ENCODE measurements at regions of chr15 and their contacts with region 1.

Region 1: DNA sequence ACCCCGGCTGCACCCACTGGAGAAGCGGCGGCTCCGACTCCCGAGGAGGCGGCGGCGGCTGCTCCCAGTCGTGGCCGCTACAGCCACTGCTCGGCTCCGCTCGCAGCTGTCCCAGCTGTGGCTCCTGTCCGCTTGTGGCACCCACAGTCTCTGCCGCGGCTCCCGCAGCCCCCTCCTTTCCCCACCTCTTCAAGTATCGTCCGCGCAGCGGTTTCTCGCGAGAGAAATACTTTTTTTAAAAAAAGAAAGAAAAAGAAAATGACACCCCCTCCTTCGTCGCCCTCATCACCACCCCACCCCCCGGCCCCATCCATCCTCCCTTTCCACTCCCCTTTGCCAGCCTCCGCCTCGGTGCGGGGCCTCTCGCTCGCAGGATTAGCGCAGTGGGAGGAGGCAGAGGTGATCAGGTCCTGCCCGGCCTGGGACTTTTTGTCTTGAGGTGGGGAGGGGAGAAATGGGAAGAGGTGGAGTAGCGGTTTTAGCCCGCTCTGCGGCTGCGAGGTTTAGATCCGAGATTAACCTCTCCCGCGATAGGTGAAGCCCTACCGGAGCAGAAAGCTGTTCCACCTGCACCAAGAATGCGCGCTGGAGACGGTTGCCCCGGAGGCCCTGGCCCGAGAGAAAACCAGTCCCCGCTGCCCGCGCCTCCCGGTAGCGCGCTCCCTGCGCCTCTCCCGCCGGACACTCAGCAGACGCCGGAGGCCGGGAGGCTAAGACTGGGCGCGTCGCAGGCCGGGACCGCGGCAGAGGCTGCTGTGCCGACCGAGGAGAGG is at the start of gene FBN1:
- DNase-seq: peak; percentile 74 to 80 (median 78)
- ATAC-seq: peak; percentile 70 to 89 (median 87)
- H3K4me3 ChIP-seq: peak within 1 kb of the TSS; percentile 67 to 96 (median 88)
- H3K27ac ChIP-seq: peak within 1 kb of the TSS; percentile 83 to 94 (median 86)
- H3K4me1 ChIP-seq: peaks cover 0 to 40% (median 8%) of the 10 kb centered on the region in 12 donors
- H3K27me3 ChIP-seq: peaks cover 0 to 36% (median 0%) of the 10 kb centered on the region in 9 donors
- CTCF ChIP-seq: no peak
- POLR2A ChIP-seq: peak; percentile 16 to 74
- total RNA-seq, gene FBN1: 22.5 to 115 (median 38.9) TPM

Region 2: DNA sequence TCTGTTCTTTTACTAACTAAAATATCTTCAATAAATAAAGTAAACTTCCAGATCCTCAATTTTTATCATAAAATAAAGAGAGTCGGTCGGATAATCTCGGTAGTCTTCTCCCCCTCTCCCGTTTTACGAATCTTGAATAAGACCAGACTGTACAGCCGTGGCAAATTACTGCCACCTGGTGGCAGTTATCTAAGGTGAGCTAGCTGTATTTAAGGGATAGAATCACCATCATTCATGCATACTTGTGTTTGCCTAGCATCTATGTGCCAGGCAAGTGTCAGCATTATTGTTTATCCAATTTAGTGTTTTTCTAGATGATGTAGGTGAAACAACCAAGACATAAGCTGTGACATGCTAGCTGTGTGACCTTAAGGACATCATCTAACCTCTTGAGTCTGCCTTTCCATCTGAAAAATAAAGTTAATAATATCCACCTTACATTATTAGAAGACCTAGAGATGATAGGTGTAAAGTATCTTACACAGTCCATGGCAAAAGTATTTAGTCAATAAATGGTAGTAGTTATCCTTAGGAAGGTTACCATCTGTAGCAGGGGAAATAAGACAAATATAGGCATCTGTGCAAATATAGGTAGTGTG is 293.2 kb before region 1 on chr15:
- intact Hi-C with region 1: loop called in 4 of 10 experiments (anchors 5 to 10 kb)
- DNase-seq: peak in 4 of 5 donors; percentile 28 to 50 (median 36)
- ATAC-seq: peak in 3 of 4 donors; percentile 68 to 71 (median 70)
- H3K4me3 ChIP-seq: peak overlapping the region in 1 of 12 donors; percentile 16
- H3K27ac ChIP-seq: no peak overlapping the region
- H3K4me1 ChIP-seq: peaks cover 0 to 8% (median 0%) of the 10 kb centered on the region in 12 donors
- H3K27me3 ChIP-seq: no peaks in the 10 kb centered on the region
- CTCF ChIP-seq: peak; percentile 67 to 87 (median 76)
- POLR2A ChIP-seq: no peak

Region 3: DNA sequence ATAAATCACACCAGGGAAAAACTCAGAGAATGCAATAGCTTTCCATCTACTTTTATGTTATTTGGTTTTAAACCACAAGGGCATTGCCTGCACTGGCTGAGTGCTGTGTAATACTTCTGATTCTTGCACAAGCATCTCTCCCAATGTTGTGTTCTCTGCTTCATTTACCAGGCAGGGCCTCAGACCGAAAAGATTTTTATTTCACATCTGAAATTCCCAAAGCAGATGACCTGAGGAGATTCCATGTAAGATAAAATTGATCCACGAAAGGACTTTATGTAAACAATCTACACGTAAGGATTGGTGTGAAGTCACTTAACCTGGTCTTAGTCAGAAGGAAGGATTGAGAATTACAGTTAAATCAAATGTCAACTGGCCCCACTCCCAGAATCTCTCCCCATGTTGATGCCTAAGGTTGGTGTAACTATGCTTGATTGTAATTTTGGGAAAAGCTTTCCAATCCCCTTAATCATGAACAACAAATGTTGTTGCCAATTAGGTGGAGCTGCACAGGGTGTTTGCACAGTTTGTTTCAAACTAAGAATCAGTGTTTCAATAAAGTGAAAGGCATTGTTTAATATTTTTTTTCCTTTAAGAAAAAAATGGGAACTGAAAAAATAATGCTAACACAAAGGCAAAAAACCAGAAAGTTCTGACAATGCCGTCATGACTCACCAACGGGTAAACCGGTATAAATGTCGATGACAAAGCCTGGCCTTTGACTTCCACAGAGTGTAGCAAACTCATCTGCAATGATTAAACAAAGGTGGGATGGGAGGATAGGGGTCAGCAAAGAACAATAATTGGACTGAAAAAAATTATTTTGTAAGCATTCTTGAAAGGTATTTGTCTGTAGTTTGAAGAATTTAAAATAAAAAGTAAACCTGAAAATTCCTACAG is 185.9 kb before region 1 on chr15:
- intact Hi-C with region 1: loop called in 1 of 10 experiments (anchors 5 kb)
- DNase-seq: no peak
- ATAC-seq: peak in 1 of 4 donors; percentile 38
- H3K4me3 ChIP-seq: no peak overlapping the region
- H3K27ac ChIP-seq: no peak overlapping the region
- H3K4me1 ChIP-seq: peaks cover 0 to 11% (median 0%) of the 10 kb centered on the region in 12 donors
- H3K27me3 ChIP-seq: no peaks in the 10 kb centered on the region
- CTCF ChIP-seq: no peak
- POLR2A ChIP-seq: no peak

Region 4: DNA sequence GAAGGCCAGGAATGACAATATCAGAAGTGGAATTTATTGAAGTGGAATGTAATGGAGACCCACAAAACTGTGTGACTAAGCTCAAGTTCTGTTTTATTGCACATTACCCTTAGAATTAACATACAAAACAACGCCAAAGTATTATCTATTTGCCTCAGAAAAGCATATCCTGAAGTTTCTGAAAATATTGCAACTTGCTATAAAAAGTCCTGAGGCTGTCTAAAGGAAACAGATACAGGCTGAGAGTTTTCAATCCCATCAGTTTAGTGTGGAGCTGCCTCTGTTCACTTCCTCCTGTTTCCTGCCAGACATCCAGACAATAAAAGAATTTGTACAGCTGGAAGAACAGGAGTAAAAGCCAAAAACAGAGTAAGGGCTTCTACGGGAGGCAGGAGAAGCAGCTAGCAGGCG is 109.1 kb before region 1 on chr15:
- intact Hi-C with region 1: loop called in 5 of 10 experiments (anchors 10 kb)
- DNase-seq: peak in 1 of 5 donors; percentile 29
- ATAC-seq: peak; percentile 80 to 89 (median 82)
- H3K4me3 ChIP-seq: no peak overlapping the region
- H3K27ac ChIP-seq: peak overlapping the region in 11 of 12 donors; percentile 19 to 76 (median 47)
- H3K4me1 ChIP-seq: peaks cover 0 to 79% (median 17%) of the 10 kb centered on the region in 12 donors
- H3K27me3 ChIP-seq: no peaks in the 10 kb centered on the region
- CTCF ChIP-seq: no peak
- POLR2A ChIP-seq: no peak

Region 5: DNA sequence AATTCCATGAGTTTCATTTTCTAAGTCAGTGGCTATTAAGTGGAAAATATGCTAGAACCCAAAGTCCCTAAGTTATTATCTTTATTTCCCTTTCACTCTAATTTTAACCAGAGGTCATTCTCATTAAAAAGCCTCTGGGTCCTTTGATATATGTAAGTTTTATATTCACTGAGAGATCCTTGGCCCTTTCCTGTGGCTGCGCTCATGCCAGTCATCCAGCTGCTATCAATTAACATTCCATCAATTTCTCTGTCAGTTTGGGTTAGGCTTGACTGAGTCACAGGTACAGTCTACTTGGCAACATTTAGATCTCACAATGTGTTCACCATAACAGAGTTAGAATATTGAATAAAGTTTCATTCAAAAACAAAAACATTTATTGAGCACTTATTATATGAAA is 57.8 kb after region 1 on chr15:
- intact Hi-C with region 1: loop called in 1 of 10 experiments (anchors 10 kb)
- DNase-seq: no peak
- ATAC-seq: no peak
- H3K4me3 ChIP-seq: no peak overlapping the region
- H3K27ac ChIP-seq: no peak overlapping the region
- H3K4me1 ChIP-seq: no peaks in the 10 kb centered on the region
- H3K27me3 ChIP-seq: no peaks in the 10 kb centered on the region
- CTCF ChIP-seq: no peak
- POLR2A ChIP-seq: no peak

Region 6: DNA sequence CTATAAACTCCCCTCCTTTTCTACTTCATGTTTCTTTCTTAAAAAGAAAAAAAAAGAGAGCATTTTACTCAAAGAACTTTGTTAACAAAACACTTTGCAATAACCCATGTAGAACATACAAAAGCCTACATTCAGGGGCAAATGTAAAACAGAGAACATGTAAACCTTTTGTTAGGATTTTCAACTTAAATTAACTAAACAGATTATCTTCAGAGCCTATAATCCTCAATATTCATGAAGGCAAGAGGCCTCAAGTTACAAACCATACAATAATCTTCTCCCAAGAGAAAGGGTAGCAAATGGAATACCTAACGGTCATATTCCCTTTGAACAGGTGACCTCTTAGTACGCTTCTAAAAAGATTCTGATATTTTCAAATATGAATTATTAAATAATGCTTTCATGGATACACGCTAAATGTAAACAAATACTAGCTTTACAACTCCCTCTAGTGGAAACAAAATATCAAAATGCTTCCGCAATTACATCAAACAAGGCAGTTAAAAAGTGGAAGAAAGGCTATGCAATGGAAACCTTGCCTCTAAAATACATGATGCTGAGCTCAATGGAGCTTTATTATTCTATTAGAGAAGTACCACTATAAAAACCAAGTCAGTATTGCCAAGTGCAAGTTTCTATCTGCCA is 155.2 kb after region 1 on chr15:
- intact Hi-C with region 1: loop called in 6 of 10 experiments (anchors 5 to 10 kb)
- DNase-seq: no peak
- ATAC-seq: no peak
- H3K4me3 ChIP-seq: peak overlapping the region in 1 of 12 donors; percentile 24
- H3K27ac ChIP-seq: peak overlapping the region in 2 of 12 donors; percentile 23 to 30
- H3K4me1 ChIP-seq: peaks cover 0 to 15% (median 1%) of the 10 kb centered on the region in 12 donors
- H3K27me3 ChIP-seq: no peaks in the 10 kb centered on the region
- CTCF ChIP-seq: peak; percentile 20 to 66 (median 51)
- POLR2A ChIP-seq: no peak

Measured in heart left ventricle (tissue), 16 donors.